HEK293 (cell line): ENCODE measurements at regions of chr15 and their contacts with region 1.

Region 1: DNA sequence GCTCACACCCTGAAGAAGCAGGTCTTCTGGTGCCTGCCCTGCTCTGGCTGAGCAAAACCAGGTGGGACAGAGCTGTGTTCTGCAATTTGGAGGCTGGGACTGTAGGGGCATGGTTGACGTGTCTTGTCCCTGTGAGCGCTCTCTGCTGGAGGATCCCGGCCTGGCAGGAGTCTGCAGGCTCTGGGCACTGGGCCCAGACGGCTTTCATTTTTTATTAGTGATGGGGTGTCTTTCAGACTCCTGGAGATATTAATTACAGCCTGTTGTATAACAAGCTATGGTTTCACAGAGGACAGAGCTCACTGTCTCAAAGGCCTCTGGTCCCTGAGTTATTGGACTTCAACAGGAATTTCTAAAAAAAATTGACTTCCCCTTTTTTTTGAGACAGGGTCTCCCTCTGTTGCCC is 29.5 kb upstream of the ZNF710 start:
- H3K4me3 ChIP-seq: no peak overlapping the region
- H3K27ac ChIP-seq: no peak overlapping the region
- H3K4me1 ChIP-seq: no peaks in the 10 kb centered on the region
- CTCF ChIP-seq: peak; percentile 87

Region 2: GRCh38 chr15:88938802-88939485 is 1032.7 kb before region 1 on chr15:
- CTCF ChIA-PET with region 1: no interaction called
- POLR2A ChIA-PET with region 1: no interaction called
- H3K4me3 ChIP-seq: no peak overlapping the region
- H3K27ac ChIP-seq: no peak overlapping the region
- H3K4me1 ChIP-seq: no peaks in the 10 kb centered on the region
- CTCF ChIP-seq: no peak

Region 3: DNA sequence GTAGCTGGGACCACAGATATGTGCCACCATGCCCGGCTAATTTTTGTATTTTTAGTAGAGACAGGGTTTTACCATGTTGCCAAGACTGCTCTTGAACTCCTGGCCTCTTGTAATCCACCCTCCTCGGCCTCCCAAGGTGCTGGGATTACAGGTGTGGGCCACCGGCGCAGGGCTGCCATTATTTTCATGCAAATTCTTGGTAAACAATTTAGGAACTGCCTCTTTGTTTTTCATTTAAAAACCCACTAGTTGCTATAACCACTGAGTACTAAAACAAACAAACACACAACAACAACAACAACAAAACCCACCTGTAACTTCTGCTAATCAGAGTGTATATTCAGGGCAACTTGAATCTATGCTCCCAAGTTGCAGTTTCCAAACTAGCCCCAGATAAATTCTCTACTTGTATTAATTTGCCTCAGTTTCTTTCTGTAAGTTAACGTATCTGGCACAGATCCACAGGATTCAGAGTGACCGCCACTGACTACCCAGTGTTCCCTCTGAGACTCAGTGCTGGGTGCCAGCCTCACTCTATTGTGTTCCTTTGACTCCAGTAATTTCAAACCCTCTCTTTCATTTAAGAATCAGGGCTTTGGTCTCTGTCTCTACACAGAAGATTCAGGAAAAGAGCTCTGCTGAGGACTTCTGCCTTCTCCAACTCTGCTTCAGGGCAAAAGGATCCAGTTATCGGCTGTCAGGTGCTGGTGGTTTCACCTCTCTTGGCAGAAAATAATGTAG is 10.9 kb after region 1 on chr15:
- CTCF ChIA-PET with region 1: interaction called, 28 read pairs
- POLR2A ChIA-PET with region 1: interaction called, 4 read pairs
- H3K4me3 ChIP-seq: no peak overlapping the region
- H3K27ac ChIP-seq: no peak overlapping the region
- H3K4me1 ChIP-seq: 0 out of 2 replicates have a peak, but pooled peaks cover 3% of the 10 kb centered on the region
- CTCF ChIP-seq: no peak

Region 4: DNA sequence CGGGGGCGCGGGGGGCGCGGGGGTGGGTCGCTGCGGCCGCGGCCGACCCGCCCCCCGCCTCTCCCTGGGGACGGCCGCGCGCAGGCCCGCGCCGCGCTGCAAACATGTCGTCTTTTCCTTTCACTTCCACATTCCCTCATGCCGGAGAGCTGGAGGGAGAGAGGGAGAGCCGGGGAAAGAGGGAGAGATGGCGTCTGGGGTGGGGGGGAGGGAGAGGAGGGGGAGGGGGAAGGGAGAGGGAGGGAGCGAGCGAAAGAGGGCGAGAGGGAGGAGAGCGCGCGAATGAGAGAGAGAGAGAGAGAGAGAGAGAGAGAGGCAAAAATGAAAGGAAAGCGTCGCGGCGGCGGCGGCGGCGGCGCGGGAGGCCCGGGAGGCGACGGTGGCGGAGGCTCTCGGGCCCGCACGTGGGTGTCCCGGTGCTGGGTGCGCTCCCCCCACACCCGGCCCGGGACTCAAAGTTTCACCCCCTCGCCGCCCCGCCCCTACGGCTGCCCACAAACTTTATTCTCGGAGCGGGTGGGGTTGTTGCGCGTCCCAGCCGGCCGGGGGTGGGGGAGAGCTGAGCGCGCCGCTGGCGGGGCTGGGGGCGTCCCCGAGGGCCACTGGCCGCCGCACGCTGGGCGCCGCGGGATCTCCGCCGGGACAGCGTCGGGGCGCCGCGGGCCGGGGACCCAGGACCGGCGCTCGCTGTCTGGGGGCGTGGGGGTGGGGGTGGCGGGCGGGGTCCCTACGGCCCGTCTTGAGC is 30.3 kb after region 1 on chr15:
- CTCF ChIA-PET with region 1: interaction called, 18 read pairs
- POLR2A ChIA-PET with region 1: no interaction called
- H3K4me3 ChIP-seq: peak overlapping the region; percentile 64
- H3K27ac ChIP-seq: peak overlapping the region; percentile 67; the same call in 1 of the 2 replicates
- H3K4me1 ChIP-seq: peaks cover 16% of the 10 kb centered on the region
- CTCF ChIP-seq: no peak

Region 5: DNA sequence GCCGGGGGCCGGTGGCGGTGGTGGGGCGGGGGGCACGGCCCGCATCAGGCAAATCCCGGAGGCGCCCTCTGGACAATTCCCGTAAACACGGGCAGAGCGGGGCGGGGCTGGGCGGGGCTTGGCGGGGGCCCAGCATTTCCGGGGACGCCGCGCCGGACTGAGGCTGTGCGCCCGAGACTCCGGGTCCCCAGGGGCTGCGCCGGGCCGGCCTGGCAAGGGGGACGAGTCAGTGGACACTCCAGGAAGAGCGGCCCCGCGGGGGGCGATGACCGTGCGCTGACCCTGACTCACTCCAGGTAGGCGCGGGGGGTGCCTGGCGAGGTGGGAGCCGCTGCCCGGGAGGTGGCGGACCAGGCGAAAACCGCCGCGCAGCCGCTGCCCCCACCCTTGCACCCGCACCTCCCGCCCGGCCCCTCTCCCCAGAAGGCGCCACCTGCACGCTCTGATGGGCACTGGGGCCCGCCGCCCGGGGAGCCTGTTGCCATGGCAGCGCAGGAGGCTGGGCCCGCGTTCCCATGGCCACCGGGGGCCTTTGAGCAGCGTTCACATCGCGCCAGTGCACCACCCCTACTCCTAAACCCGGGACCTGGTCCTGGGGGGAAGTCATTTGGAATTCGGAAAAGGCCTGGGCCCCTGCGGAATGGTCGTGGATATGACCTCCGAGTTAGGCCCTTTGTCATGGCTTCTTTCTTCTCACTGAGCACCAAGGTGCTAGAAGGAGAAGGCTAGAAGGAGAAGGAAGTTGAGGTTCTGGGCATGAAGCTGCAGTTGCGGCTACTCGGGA is 213.4 kb after region 1 on chr15:
- CTCF ChIA-PET with region 1: no interaction called
- POLR2A ChIA-PET with region 1: no interaction called
- H3K4me3 ChIP-seq: peak overlapping the region; percentile 88
- H3K27ac ChIP-seq: peak overlapping the region; percentile 46; the same call in 1 of the 2 replicates
- H3K4me1 ChIP-seq: peaks cover 10% of the 10 kb centered on the region
- CTCF ChIP-seq: 0 out of 2 replicates have a peak, but pooled peaks have one; percentile 14